ENCODE measurements at regions of chr11 and their contacts with region 1.

Region 1: DNA sequence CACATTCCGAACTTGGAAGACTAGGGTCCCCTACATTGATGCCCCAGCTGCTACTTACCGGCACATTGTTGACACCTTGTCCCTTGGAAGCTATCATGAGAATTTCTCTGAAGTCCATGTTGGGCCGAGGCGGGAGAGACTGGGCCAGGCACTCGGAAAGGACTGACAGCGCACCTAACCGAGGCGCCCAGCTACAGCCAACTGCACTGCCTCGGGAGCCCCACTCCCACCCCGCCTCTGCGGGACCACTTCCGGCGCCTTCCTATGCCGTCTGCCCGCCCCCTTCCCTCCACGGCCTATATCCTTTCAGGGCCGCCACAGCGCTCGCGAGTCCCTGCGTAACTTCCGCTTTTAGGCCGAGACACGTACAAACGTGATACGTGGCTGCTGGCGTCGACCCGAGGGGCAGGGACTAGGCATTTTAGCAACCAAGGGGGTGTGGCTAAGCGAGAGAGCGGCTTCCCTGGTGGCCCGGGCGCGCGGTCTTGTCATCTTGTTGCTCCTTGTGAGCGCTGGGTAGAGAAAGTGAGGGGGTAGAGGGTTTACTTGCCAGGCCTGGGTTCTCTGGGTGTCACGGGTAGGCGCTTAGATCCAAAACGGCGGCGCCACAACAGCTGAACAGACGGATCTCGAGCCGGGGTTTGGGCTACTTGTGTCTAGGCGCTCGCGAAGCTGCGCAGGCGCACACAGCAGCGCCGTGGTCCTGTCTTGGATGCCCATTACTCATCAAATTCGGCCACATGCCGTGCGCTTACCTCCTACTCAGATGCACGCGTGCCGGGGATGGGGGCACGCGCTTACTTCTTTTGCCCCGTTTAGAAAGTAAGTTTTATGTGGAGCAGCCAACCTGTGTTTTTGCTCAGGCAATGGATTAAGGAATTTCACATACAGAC is at the start of gene SPTY2D1:
- DNase-seq: peak; percentile 88 to 99 (median 98)
- ATAC-seq: peak; percentile 97
- H3K4me3 ChIP-seq: peak within 1 kb of the TSS; percentile 98
- H3K4me3 Mint-ChIP-seq: peak within 1 kb of the TSS; percentile 83 to 99 (median 96)
- H3K27ac ChIP-seq: peak within 1 kb of the TSS; percentile 98
- H3K27ac Mint-ChIP-seq: peak within 1 kb of the TSS; percentile 95 to 100 (median 98)
- H3K4me1 ChIP-seq: peaks cover 10 to 17% of the 10 kb centered on the region in 2 donors
- H3K4me1 Mint-ChIP-seq: peaks cover 6 to 58% (median 32%) of the 10 kb centered on the region in 7 donors
- H3K27me3 ChIP-seq: no peaks in the 10 kb centered on the region
- H3K27me3 Mint-ChIP-seq: peaks cover 0 to 7% (median 0%) of the 10 kb centered on the region in 5 donors
- total RNA-seq, gene SPTY2D1: 26.0 to 37.4 (median 28.2) TPM

Region 2: DNA sequence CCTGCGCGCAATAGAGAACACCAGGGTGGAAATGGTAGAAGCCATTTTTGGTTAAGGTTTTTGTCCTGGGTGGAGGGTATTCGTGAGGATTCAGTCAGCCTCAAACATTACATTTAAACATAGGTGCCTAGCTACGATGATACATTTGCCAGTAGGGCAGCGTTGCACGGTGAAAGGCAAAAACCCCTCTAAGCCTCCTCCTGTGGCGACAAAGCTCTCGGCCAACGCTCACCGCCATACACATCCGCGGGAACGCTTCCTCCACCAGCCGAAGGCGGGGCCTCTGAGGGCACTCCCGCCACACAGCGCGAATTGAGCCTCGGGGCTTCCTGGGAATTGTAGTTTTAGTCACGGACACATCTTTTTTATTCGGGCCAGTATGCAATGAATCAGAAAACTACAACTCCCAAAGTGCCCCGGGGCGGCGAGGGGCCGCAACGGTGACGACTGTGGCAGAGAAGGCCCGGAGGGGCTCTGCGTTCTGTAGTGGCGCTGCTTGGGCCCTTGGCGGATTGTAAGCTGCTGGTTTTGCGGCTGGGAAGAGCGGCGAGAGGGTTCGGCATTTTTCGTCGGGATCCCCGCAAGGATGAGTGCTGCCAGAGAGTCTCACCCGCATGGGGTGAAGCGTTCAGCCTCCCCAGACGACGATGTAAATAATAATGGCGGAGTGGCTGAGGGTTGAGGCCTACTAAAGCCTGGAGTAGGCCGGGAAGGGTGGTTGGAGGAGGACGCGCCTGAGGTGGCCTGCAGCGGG is 1896.0 kb before region 1 on chr11 and contains the start of gene C11orf58:
- CTCF ChIA-PET with region 1: no interaction called
- POLR2A ChIA-PET with region 1: no interaction called
- intact Hi-C with region 1: loop called in 1 of 2 experiments (anchors 1 kb)
- DNase-seq: peak; percentile 87 to 98 (median 97)
- ATAC-seq: peak; percentile 97
- H3K4me3 ChIP-seq: peak within 1 kb of the TSS; percentile 92
- H3K4me3 Mint-ChIP-seq: peak within 1 kb of the TSS in 5 of 10 donors; percentile 72 to 87 (median 77)
- H3K27ac ChIP-seq: peak within 1 kb of the TSS; percentile 98
- H3K27ac Mint-ChIP-seq: peak within 1 kb of the TSS in 2 of 9 donors; percentile 83 to 97
- H3K4me1 ChIP-seq: peaks cover 28 to 33% of the 10 kb centered on the region in 2 donors
- H3K4me1 Mint-ChIP-seq: peaks cover 6 to 32% (median 21%) of the 10 kb centered on the region in 7 donors
- H3K27me3 ChIP-seq: no peaks in the 10 kb centered on the region
- H3K27me3 Mint-ChIP-seq: peaks cover 0 to 3% (median 0%) of the 10 kb centered on the region in 5 donors
- total RNA-seq, gene C11orf58: 116 to 168 (median 155) TPM

Region 3: DNA sequence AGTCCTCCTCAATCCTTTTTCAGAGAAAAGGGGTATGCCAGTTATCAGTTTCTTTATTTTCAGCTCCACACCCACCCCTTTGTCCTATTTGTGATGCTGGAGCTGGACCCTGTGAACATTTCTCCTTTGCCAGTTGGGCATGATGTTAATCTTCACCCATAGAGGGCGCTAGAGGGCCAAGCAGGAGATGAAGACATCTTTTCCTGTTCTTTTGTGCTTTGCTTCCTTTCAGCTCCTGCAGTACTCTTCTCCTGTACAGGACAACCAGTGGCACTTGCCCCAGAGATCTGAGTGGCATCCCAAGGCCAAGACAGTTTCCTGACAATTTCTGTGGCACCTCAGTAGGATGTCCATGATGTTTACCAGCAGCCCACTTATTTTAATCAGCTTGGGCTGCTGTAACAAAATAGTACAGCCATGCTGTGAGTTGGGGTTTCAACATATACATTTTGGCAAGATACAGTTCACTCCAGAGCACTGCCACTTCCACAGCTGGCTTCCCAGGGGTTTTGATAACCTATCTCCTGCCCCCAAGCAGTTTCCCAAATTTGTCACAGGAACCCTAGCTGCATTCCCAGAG is 390.5 kb before region 1 on chr11:
- CTCF ChIA-PET with region 1: no interaction called
- POLR2A ChIA-PET with region 1: no interaction called
- intact Hi-C with region 1: loop called in 1 of 2 experiments (anchors 10 kb)
- DNase-seq: peak in 8 of 9 donors; percentile 15 to 63 (median 50)
- ATAC-seq: peak; percentile 80
- H3K4me3 ChIP-seq: no peak overlapping the region
- H3K4me3 Mint-ChIP-seq: no peak overlapping the region
- H3K27ac ChIP-seq: no peak overlapping the region
- H3K27ac Mint-ChIP-seq: no peak overlapping the region
- H3K4me1 ChIP-seq: no peaks in the 10 kb centered on the region
- H3K4me1 Mint-ChIP-seq: peaks cover 0 to 32% (median 0%) of the 10 kb centered on the region in 7 donors
- H3K27me3 ChIP-seq: no peaks in the 10 kb centered on the region
- H3K27me3 Mint-ChIP-seq: peaks cover 6 to 37% (median 16%) of the 10 kb centered on the region in 5 donors

Region 4: GRCh38 chr11:18540207-18541009 is 94.0 kb before region 1 on chr11:
- CTCF ChIA-PET with region 1: interaction called, 4 read pairs
- POLR2A ChIA-PET with region 1: interaction called, 5 read pairs
- intact Hi-C with region 1: loop called in 1 of 2 experiments (anchors 5 kb)
- DNase-seq: peak in 6 of 9 donors; percentile 30 to 60 (median 44)
- ATAC-seq: peak; percentile 73
- H3K4me3 ChIP-seq: no peak overlapping the region
- H3K4me3 Mint-ChIP-seq: no peak overlapping the region
- H3K27ac ChIP-seq: no peak overlapping the region
- H3K27ac Mint-ChIP-seq: peak overlapping the region in 2 of 9 donors; percentile 2 to 13
- H3K4me1 ChIP-seq: no peaks in the 10 kb centered on the region
- H3K4me1 Mint-ChIP-seq: peaks cover 0 to 8% (median 0%) of the 10 kb centered on the region in 7 donors
- H3K27me3 ChIP-seq: no peaks in the 10 kb centered on the region
- H3K27me3 Mint-ChIP-seq: no peaks in the 10 kb centered on the region

Region 5: DNA sequence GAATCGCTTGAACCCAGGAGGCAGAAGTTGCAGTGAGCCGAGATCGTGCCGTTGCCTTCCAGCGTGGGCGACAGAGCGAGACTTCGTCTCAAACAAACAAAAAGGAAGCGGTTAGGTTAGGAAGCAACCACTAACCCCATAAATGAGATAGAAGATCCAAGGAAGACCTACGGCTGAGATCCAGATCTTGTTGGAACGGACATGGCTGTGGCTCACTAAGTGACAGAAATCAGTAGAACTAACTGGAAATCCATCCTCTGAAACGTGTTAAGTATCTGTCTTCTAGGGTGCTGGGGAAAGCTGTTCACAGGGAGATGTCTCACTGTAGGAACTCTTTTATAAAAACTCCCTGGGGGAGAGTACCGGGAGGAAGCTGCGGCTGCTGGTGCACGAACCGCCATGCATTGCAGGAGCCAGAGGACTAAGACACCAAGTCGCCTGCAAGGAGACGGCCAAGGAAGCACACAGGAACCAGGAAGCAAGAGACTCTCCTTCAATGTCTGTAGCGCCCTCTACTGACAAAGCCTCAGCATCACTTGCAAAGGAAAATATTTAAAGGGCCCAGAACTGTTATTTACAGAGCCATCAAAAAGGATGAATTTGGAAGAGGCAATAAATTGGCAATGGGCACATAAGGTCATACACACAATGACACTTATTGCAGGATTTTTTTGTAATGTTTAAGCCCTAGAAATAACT is 16.6 kb after region 1 on chr11:
- CTCF ChIA-PET with region 1: interaction called, 6 read pairs
- POLR2A ChIA-PET with region 1: interaction called, 3 read pairs
- intact Hi-C with region 1: loop called in 1 of 2 experiments (anchors 1 kb)
- DNase-seq: peak in 5 of 9 donors; percentile 11 to 37 (median 20)
- ATAC-seq: peak; percentile 73
- H3K4me3 ChIP-seq: no peak overlapping the region
- H3K4me3 Mint-ChIP-seq: no peak overlapping the region
- H3K27ac ChIP-seq: no peak overlapping the region
- H3K27ac Mint-ChIP-seq: peak overlapping the region in 1 of 9 donors; percentile 30
- H3K4me1 ChIP-seq: no peaks in the 10 kb centered on the region
- H3K4me1 Mint-ChIP-seq: peaks cover 0 to 15% (median 0%) of the 10 kb centered on the region in 7 donors
- H3K27me3 ChIP-seq: no peaks in the 10 kb centered on the region
- H3K27me3 Mint-ChIP-seq: no peaks in the 10 kb centered on the region

Region 6: GRCh38 chr11:18721561-18722292 is 87.3 kb after region 1 on chr11:
- CTCF ChIA-PET with region 1: interaction called, 10 read pairs
- POLR2A ChIA-PET with region 1: interaction called, 3 read pairs
- intact Hi-C with region 1: loop called (anchors 1 kb)
- DNase-seq: peak; percentile 15 to 51 (median 37)
- ATAC-seq: peak; percentile 61
- H3K4me3 ChIP-seq: peak overlapping the region; percentile 72
- H3K4me3 Mint-ChIP-seq: peak overlapping the region; percentile 82 to 97 (median 92)
- H3K27ac ChIP-seq: peak overlapping the region; percentile 46
- H3K27ac Mint-ChIP-seq: peak overlapping the region in 6 of 9 donors; percentile 39 to 89 (median 76)
- H3K4me1 ChIP-seq: peaks cover 0 to 5% of the 10 kb centered on the region in 2 donors
- H3K4me1 Mint-ChIP-seq: peaks cover 8 to 15% (median 9%) of the 10 kb centered on the region in 7 donors
- H3K27me3 ChIP-seq: no peaks in the 10 kb centered on the region
- H3K27me3 Mint-ChIP-seq: peaks cover 0 to 34% (median 0%) of the 10 kb centered on the region in 5 donors

Measured in naive thymus-derived CD4-positive, alpha-beta T cell (primary cell).